Heart right ventricle (tissue), 16 donors: ENCODE measurements at regions of chrX and their contacts with region 1.

Region 1: DNA sequence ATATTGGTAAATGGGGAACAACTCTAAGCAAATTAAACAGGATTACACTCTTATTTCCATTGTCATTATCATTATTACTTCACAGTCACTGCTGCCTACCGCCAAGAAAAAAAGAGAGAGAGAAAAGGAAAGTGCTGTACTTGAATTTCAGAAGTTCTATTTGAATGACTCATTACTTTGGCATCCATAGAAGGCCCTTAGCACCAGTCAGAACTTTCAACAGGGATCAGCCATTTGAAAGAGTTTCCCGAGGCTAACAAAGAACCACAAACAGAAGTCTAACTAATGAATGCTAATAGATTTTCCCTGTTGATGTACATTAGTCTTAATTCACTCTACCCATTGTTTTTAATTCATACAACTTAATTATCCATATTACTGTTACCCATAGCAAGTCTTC is 116.3 kb downstream of the SHROOM4 start:
- DNase-seq: no peak
- ATAC-seq: peak in 4 of 8 donors; percentile 46 to 62 (median 56)
- H3K4me3 ChIP-seq: no peak overlapping the region
- H3K27ac ChIP-seq: peak overlapping the region in 1 of 10 donors; percentile 5
- H3K4me1 ChIP-seq: peaks cover 0 to 9% (median 0%) of the 10 kb centered on the region in 9 donors
- H3K27me3 ChIP-seq: peaks cover 0 to 76% (median 0%) of the 10 kb centered on the region in 7 donors
- CTCF ChIP-seq: no peak

Region 2: DNA sequence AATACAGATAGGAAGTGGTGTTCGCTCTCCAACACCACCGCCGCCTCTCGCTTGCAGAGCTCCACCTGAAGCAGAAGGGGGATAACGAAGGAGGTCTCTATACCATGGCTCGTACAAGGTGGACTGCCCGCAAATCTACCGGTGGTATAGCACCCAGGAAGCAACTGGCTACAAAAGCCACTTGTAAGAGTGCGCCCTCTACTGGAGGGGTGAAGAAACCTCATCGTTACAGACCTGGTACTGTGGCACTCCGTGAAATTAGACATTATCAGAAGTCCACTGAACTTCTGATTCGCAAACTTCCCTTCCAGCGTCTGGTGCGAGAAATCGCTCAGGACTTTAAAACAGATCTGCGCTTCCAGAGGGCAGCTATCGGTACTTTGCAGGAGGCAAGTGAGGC is 207.6 kb after region 1 on chrX:
- intact Hi-C with region 1: loop called in 2 of 10 experiments (anchors 5 kb)
- DNase-seq: no peak
- ATAC-seq: no peak
- H3K4me3 ChIP-seq: no peak overlapping the region
- H3K27ac ChIP-seq: no peak overlapping the region
- H3K4me1 ChIP-seq: no peaks in the 10 kb centered on the region
- H3K27me3 ChIP-seq: peaks cover 0 to 52% (median 0%) of the 10 kb centered on the region in 7 donors
- CTCF ChIP-seq: peak in 3 of 9 donors; percentile 6 to 44 (median 11)

Region 3: GRCh38 chrX:50920132-50920531 is 222.4 kb after region 1 on chrX:
- intact Hi-C with region 1: loop called in 3 of 10 experiments (anchors 5 kb)
- DNase-seq: no peak
- ATAC-seq: no peak
- H3K4me3 ChIP-seq: no peak overlapping the region
- H3K27ac ChIP-seq: no peak overlapping the region
- H3K4me1 ChIP-seq: no peaks in the 10 kb centered on the region
- H3K27me3 ChIP-seq: peaks cover 0 to 34% (median 0%) of the 10 kb centered on the region in 7 donors
- CTCF ChIP-seq: peak in 7 of 9 donors; percentile 25 to 49 (median 39)